Left colon (tissue), 2 donors: ENCODE measurements at regions of chrX and their contacts with region 1.

Region 1: GRCh38 chrX:13506574-13506973 is 62.8 kb upstream of the EGFL6 start:
- DNase-seq: peak in 1 of 2 donors; percentile 61
- ATAC-seq: no peak

Region 2: DNA sequence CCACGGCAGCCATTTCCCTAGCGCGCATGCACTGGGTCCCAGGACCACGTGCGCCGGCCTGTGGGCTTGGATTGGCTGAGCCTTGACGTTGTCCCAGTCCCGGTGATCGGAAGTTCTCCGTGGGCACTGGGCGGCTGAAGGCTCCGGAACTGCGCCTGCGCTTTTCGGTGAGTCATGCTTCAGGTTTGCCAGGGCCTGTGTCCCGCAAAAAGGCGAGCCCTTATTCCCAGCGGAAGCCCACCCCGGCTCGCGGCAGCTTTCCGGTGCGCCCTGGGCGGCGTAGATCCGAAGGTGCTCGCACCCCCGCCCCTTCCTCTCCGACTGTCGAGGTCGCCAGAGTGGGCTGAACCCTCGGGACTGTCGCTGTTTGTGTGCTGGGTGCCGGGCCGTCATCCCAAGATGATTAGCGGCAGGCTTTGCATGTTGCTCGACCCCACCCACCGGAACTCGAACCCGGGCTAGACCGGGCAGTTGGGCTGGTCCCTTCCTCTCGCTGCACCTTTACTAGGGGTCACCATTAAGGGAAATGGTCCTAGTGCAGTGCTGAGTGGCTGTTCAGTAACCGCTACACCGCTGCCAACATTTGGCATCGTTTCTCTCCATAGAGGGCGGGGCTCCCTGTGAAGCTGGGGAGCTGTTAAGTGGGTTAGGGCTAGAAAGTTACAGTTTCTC is 146.6 kb after region 1 on chrX and contains the start of gene TCEANC:
- intact Hi-C with region 1: loop called in 1 of 2 experiments (anchors 5 kb)
- DNase-seq: peak; percentile 98
- ATAC-seq: peak; percentile 99
- total RNA-seq, gene TCEANC: 2.2 to 4.3 TPM

Region 3: GRCh38 chrX:13750204-13750603 is 243.6 kb after region 1 on chrX:
- intact Hi-C with region 1: loop called in 1 of 2 experiments (anchors 10 kb)
- DNase-seq: no peak
- ATAC-seq: peak; percentile 57

Region 4: DNA sequence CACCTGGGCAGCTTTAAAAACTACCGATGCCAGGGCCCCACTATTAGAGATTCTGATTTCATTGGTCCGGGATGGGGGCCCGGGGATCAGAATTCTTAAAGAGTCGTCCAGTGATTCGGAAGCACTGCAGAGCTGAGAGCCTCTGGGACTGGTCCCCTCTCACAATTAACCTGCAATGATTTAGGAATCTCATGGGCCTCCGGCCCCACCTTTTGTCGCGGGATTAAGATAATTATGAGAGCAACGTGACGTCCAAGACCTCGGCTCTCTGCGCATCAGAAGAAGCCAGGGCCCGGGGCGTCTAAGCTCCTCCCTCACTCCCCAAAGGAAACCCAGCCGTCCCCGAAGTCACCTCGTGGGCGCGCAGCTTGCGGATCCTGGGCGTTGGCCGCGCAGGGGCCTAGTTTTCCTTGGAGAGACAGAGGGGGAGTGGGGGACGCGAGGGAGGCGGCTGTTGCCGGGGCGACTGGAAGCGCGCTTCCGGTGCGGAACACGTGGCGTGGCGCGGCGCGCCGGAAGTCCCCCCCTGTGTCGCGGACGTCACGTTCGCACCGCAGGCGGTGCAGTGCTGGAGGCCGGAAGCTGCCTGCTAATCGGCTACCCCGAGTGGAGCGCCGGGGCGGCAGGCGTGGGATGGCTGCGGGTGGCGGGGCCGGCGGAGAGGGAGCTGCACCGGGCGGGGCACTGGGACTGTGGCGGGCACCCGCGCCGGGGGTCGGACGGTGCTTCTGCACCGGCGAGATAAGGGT is 523.0 kb after region 1 on chrX and contains the start of gene GEMIN8:
- intact Hi-C with region 1: loop called in 1 of 2 experiments (anchors 2 kb)
- DNase-seq: peak; percentile 89 to 91
- ATAC-seq: peak; percentile 96
- total RNA-seq, gene GEMIN8: 11.8 to 13.3 TPM